Left ventricle myocardium inferior (tissue), 1 donor: ENCODE measurements at regions of chr7 and their contacts with region 1.

Region 1: DNA sequence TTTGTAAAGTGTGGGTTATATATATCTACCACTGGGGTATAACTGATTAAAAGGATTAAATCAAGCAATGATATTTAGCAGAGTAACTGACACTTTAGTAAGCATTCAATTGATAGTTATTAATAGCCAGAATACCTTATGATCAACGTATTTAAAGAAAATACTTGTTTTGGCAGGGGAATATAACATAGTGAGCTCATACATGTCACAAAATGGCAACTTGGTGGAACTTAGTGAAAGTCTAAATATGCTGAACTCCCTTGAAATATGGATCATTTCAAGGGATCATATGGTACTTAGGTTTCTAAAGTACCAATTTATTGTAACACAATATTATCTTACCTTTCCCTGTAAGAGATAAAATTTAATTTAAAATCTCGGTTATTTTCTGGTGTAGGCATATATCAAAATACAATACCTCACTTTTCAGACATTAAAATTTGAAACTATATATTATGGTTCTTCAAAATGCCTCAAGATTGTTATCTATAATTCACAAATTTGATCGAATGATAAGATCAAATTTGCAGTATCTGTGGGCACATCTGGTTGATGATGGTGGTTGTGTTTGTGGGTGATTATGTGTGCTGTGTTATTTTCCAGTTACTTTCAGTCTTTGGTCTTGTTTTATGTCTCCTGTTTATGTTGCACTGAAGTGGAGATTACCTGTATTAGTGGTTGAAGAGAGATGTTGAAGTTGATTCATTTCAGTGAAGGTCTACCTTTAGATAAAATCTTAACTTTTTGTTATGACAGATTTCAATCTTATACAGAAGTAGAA is 5.2 kb downstream of the ARL4A start:
- DNase-seq: no peak
- H3K4me3 ChIP-seq: no peak overlapping the region
- H3K27ac ChIP-seq: no peak overlapping the region
- H3K4me1 ChIP-seq: peaks cover 40% of the 10 kb centered on the region
- H3K27me3 ChIP-seq: no peaks in the 10 kb centered on the region
- CTCF ChIP-seq: no peak

Region 2: GRCh38 chr7:12549106-12549505 is 143.6 kb before region 1 on chr7:
- intact Hi-C with region 1: no loop called
- DNase-seq: no peak
- H3K4me3 ChIP-seq: no peak overlapping the region
- H3K27ac ChIP-seq: no peak overlapping the region
- H3K4me1 ChIP-seq: no peaks in the 10 kb centered on the region
- H3K27me3 ChIP-seq: no peaks in the 10 kb centered on the region
- CTCF ChIP-seq: no peak

Region 3: DNA sequence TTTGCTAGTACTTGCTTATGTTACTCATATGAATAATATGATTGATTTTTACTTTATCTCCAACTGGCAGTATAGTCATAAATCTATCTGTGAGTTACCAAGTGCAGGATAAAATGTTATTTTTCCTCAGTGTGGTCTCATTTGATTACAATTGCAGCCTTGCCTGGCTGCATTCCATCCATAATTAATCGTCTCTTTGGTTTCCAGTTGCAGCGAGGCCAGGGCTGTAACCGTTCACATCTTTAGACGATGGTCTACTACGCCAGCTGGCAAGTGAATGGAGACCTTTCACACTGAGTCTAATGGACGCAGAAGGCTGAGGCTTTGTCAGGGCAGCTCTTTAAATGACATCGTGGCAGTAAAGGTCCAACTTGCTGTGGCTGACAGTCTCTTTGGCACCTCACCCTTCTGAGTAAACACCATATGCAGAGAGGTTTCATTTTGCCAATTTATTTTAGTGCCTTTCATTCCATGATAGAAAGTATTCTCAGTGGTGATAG is 78.8 kb after region 1 on chr7:
- intact Hi-C with region 1: loop called (anchors 5 kb)
- DNase-seq: no peak
- H3K4me3 ChIP-seq: peak overlapping the region; percentile 38
- H3K27ac ChIP-seq: peak overlapping the region; percentile 64
- H3K4me1 ChIP-seq: peaks cover 29% of the 10 kb centered on the region
- H3K27me3 ChIP-seq: no peaks in the 10 kb centered on the region
- CTCF ChIP-seq: no peak